Activated T-helper 1 cell treated with anti-CD3 and anti-CD28 coated beads, Interleukin-12 subunit alpha, Interleukin-12 subunit beta, Interleukin-2, Interleukin-4 antibody, amounts not matched to agents 30 ng/mL and 10 ng/mL and 1 ng/mL, durations not matched to agents 14 hours and 24 hours and 36 hours (primary cell): ENCODE measurements at regions of chr1 and their contacts with region 1.

Region 1: DNA sequence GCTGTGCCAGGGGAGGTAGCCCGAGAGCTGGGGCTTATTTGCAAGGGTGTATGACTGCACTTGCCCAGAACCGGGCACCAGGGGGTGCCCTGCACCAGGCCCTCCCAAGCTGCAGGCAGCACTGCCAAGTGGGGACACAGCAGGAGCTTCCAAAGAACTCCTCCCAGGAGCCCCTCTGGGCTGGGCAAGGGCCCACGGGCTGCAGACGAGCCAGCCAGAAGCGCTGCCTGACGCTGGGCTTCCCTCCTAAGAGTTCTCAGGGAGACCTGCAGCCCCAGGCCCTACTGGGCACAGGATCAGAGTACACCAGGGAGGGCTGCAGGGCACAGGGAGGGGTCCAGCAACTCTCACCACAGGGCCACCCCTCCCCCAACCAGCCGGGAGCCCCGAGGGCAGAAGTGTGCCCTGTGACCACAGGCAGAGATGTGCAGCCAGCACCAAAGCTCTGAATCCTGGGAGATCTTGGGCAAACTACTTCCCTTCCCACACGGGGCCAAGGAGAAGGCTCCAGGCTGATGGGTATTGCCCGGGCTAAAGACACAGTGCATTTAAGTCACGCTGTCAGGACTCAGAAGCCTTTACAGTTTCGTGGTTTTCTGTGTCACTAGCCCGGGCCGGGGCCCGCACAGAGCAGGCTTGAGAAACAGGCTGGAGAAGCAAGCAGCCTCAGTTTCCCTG is 63.4 kb downstream of the KCNAB2 start:
- DNase-seq: peak; percentile 25
- H3K4me3 Mint-ChIP-seq: no peak overlapping the region
- H3K27ac Mint-ChIP-seq: no peak overlapping the region
- H3K4me1 Mint-ChIP-seq: no peaks in the 10 kb centered on the region
- H3K27me3 Mint-ChIP-seq: peaks cover 8% of the 10 kb centered on the region

Region 2: GRCh38 chr1:6141592-6141991 is 32.5 kb after region 1 on chr1:
- intact Hi-C with region 1: loop called (anchors 2 kb)
- DNase-seq: no peak
- H3K4me3 Mint-ChIP-seq: no peak overlapping the region
- H3K27ac Mint-ChIP-seq: no peak overlapping the region
- H3K4me1 Mint-ChIP-seq: peaks cover 4% of the 10 kb centered on the region
- H3K27me3 Mint-ChIP-seq: peaks cover 1% of the 10 kb centered on the region

Region 3: GRCh38 chr1:6180212-6180575 is 71.1 kb after region 1 on chr1 and contains the start of gene CHD5:
- intact Hi-C with region 1: loop called (anchors 5 kb)
- DNase-seq: no peak
- H3K4me3 Mint-ChIP-seq: peak within 1 kb of the TSS; percentile 13
- H3K27ac Mint-ChIP-seq: peak within 1 kb of the TSS; percentile 26
- H3K4me1 Mint-ChIP-seq: peaks cover 18% of the 10 kb centered on the region
- H3K27me3 Mint-ChIP-seq: peaks cover 39% of the 10 kb centered on the region
- total RNA-seq, gene CHD5: 0.62 and 0.83 TPM in 2 replicates